ENCODE measurements at regions of chr3 and their contacts with region 1.

Region 1: DNA sequence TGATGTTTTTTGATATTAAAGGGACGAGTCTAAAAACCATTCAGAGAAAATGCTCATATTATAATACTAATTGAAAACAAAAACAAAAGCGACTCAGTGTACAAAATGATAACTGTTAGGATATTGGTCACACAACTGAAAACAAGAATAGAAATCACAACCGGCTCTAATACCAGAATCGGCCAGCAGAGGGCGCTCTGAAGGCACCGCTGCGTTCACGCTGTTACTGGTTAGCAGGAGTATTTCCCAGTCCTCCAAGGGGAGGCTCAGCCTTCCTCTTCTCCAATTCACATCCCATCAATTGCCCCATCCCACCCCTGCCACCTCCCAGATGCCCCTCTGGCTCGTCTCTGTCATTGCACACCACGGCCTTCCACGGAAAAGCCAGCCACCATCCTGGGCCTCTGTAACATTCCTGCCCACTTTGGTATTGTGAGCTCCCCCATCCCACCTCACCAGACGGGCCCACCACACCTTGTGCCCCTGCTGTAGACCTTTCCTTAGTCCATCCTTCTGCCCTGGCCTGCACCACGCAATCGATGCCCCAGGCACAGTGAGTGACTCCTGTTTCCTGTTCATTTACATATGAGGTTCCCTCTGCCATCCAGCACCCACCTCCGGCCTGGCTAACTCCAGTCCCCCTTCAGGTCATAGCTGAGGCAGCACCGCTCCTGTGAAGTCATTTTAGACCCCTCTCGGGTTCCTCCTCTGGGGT is 8.5 kb downstream of the FAM107A start:
- DNase-seq: peak; percentile 88 to 95
- H3K4me3 ChIP-seq: no peak overlapping the region
- H3K27ac ChIP-seq: no peak overlapping the region
- H3K4me1 ChIP-seq: peaks cover 21% of the 10 kb centered on the region
- H3K27me3 ChIP-seq: no peaks in the 10 kb centered on the region
- CTCF ChIP-seq: peak; percentile 88 to 90 (median 88)
- POLR2A ChIP-seq: no peak

Region 2: DNA sequence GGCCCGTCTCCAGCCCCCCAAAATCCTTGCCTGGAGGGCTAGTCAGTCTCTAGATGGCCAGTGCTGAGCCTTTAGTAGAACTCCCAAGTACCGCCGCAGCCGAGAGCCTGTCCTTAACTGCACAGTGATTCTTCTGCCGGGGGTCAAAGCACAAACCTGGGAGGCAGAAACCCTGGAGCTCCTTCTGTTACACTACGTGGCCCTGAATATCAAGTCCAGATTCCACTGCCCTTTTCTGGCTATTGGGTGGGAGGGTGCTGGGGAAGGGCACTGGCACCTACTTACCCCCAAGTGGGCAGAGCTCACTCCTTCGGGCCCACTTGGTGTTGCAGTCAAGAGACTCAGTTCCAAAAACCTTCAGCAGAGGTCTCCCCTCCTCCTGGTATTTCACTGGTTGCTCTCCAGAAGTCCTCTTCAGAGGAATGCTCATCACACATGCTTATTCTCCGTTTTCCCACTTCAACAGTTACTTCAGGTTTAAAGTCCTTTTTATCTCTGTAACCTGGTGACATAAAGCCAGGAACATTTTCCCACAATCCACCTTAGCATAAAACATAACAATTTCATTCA is 145.9 kb before region 1 on chr3:
- intact Hi-C with region 1: no loop called
- DNase-seq: no peak
- H3K4me3 ChIP-seq: no peak overlapping the region
- H3K27ac ChIP-seq: peak overlapping the region; percentile 22
- H3K4me1 ChIP-seq: peaks cover 16% of the 10 kb centered on the region
- H3K27me3 ChIP-seq: no peaks in the 10 kb centered on the region
- CTCF ChIP-seq: no peak
- POLR2A ChIP-seq: no peak

Region 3: GRCh38 chr3:58628823-58629562 is 60.3 kb after region 1 on chr3:
- intact Hi-C with region 1: loop called (anchors 2 kb)
- DNase-seq: no peak
- H3K4me3 ChIP-seq: no peak overlapping the region
- H3K27ac ChIP-seq: peak overlapping the region; percentile 43
- H3K4me1 ChIP-seq: peaks cover 27% of the 10 kb centered on the region
- H3K27me3 ChIP-seq: no peaks in the 10 kb centered on the region
- CTCF ChIP-seq: no peak
- POLR2A ChIP-seq: no peak